Endothelial cell of umbilical vein (primary cell): ENCODE measurements at regions of chr15 and their contacts with region 1.

Region 1: GRCh38 chr15:51162865-51163762 is 68.4 kb upstream of the TNFAIP8L3 start:
- DNase-seq: peak; percentile 85
- H3K4me3 ChIP-seq: peak overlapping the region in 1 of 3 experiments; percentile 23
- H3K27ac ChIP-seq: no peak overlapping the region
- H3K4me1 ChIP-seq: peaks cover 4% of the 10 kb centered on the region
- H3K27me3 ChIP-seq: peaks cover 9 to 12% of the 10 kb centered on the region in 2 experiments
- CTCF ChIP-seq: peak; percentile 87 to 94
- POLR2A ChIP-seq: no peak

Region 2: DNA sequence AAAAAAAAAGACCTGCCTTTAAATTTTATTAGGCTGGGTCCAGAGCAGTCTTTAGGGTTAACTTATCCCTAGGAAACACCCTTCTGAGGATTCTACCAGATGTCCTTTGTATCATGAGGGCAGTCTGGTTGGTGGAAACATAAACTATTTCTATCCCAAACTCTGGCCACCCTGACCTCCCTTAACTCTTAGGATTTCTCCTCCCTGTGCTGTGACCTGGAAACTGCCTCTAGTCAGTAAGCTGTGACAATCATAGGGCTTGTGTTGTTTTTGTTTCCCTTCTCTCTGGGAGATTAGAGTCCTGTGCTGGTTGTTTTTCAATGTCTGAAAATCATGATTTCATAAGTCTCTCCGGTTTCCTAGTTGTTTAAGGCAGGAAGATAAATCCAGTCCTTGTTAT is 146.5 kb before region 1 on chr15:
- CTCF ChIA-PET with region 1: no interaction called
- POLR2A ChIA-PET with region 1: no interaction called
- dilution Hi-C with region 1: no loop called
- intact Hi-C with region 1: no loop called
- DNase-seq: no peak
- H3K4me3 ChIP-seq: no peak overlapping the region
- H3K27ac ChIP-seq: no peak overlapping the region
- H3K4me1 ChIP-seq: no peaks in the 10 kb centered on the region
- H3K27me3 ChIP-seq: no peaks in the 10 kb centered on the region
- CTCF ChIP-seq: no peak
- POLR2A ChIP-seq: no peak

Region 3: DNA sequence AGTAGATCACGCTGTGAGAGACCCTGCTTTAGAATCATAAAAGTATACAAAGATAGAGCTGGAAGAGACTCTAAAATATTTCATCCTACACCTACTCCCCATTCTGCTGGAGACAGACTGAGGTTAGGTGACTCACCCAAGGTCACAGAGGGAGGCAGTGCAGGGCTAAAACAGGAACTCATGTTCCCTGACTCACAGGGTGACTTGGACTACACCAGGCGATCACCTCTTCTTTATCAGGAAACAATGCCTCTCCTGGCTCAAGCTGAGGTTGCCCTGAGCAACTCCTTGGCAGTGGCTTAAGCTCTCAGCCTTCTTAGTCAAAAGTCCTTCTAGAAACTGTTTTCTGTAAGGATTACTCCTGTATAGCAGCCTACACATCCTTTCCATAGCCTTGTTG is 42.0 kb before region 1 on chr15:
- CTCF ChIA-PET with region 1: interaction called, 10 read pairs
- POLR2A ChIA-PET with region 1: no interaction called
- dilution Hi-C with region 1: no loop called
- intact Hi-C with region 1: no loop called
- DNase-seq: peak; percentile 98
- H3K4me3 ChIP-seq: no peak overlapping the region
- H3K27ac ChIP-seq: peak overlapping the region; percentile 85
- H3K4me1 ChIP-seq: peaks cover 25% of the 10 kb centered on the region
- H3K27me3 ChIP-seq: no peaks in the 10 kb centered on the region
- CTCF ChIP-seq: no peak
- POLR2A ChIP-seq: peak; percentile 54

Region 4: GRCh38 chr15:51192521-51193280 is 29.6 kb after region 1 on chr15:
- CTCF ChIA-PET with region 1: interaction called, 470 read pairs
- POLR2A ChIA-PET with region 1: no interaction called
- dilution Hi-C with region 1: no loop called
- intact Hi-C with region 1: loop called (anchors 1 kb)
- DNase-seq: peak; percentile 85
- H3K4me3 ChIP-seq: no peak overlapping the region
- H3K27ac ChIP-seq: no peak overlapping the region
- H3K4me1 ChIP-seq: peaks cover 18% of the 10 kb centered on the region
- H3K27me3 ChIP-seq: peaks cover 33 to 45% of the 10 kb centered on the region in 2 experiments
- CTCF ChIP-seq: peak; percentile 93 to 94
- POLR2A ChIP-seq: no peak

Region 5: GRCh38 chr15:51267703-51268083 is 104.6 kb after region 1 on chr15:
- CTCF ChIA-PET with region 1: interaction called, 15 read pairs
- POLR2A ChIA-PET with region 1: no interaction called
- dilution Hi-C with region 1: no loop called
- intact Hi-C with region 1: no loop called
- DNase-seq: no peak
- H3K4me3 ChIP-seq: no peak overlapping the region
- H3K27ac ChIP-seq: no peak overlapping the region
- H3K4me1 ChIP-seq: no peaks in the 10 kb centered on the region
- H3K27me3 ChIP-seq: peaks cover 66 to 82% of the 10 kb centered on the region in 2 experiments
- CTCF ChIP-seq: no peak
- POLR2A ChIP-seq: no peak

Region 6: DNA sequence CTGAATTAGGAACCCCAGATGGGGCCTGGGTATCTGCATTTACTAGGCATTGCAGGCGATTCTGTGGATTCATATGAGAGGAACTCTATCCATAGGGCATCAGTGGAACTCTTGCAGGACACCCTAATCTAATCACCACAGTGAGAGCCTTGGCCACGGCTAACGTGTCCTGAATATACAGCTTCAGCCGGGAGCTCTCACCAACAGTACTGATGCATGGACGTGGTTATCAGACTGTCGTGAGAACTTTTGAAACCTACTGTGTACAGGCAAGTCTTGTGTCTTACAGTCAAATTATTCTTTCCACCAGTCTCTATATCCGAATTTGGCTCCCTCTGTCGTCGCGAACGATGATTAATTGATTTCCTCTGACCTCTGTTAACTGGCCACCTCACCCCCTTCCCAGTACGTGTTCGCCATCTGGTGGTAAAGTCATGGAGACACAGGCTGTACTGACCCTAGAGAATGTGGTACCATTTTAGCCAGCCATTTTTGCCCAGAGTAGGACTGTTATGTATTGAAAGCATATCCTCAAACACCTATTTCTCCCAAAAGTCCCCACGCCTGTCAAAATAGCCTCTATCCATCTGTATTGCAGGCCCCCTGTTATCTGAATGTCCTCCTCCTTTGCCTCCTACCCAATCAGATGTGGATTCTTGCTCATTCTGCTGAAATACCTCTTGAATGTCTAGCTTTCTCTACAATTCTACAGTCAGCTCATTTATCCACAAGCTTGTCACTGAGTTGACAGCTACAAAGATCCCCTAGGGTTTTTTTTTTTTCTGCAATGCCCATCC is 218.1 kb after region 1 on chr15:
- CTCF ChIA-PET with region 1: interaction called, 207 read pairs
- POLR2A ChIA-PET with region 1: no interaction called
- dilution Hi-C with region 1: no loop called
- intact Hi-C with region 1: loop called (anchors 1 kb)
- DNase-seq: peak; percentile 67
- H3K4me3 ChIP-seq: no peak overlapping the region
- H3K27ac ChIP-seq: no peak overlapping the region
- H3K4me1 ChIP-seq: no peaks in the 10 kb centered on the region
- H3K27me3 ChIP-seq: peaks cover 40 to 59% of the 10 kb centered on the region in 2 experiments
- CTCF ChIP-seq: peak; percentile 82 to 87
- POLR2A ChIP-seq: no peak